ENCODE measurements at regions of chr1 and their contacts with region 1.

Region 1: DNA sequence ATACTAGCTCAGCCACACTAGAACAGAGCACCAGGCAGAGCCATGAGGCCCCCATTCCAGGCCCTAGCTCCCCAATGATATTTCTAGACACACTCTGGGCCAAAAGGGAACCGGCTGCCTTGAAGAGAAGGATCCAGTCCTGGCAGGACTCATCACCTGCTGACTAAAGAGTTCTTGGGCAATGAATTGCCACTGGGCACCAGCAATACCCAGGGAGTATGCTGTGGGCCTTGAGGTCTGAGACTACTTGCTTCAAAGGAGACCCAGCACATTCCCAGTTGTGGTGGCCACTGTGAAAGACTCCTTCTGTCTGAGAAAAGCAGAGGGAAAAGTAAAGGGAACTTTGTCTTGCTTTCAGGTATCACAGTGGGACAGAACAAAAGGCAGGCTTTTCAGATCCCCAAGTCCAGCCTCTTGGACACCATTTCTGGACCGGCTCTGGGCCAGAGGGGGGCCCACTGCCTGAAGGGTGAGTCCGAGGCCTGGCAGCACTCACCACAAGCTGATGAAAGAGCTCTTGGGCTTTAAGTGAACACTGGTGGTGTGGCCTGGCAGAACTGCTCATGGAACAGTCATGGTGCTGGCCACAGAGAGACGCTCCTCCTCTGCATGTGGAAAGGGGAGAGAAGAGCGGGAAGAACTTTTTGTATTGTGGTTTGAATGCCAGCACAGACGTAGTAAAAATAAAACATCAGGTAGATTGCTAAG is 72.5 kb downstream of the CDC42BPA start:
- DNase-seq: peak; percentile 62
- H3K4me3 ChIP-seq: no peak overlapping the region
- H3K27ac ChIP-seq: peak overlapping the region; percentile 75
- H3K4me1 ChIP-seq: peaks cover 55% of the 10 kb centered on the region
- H3K27me3 ChIP-seq: no peaks in the 10 kb centered on the region
- CTCF ChIP-seq: no peak

Region 2: DNA sequence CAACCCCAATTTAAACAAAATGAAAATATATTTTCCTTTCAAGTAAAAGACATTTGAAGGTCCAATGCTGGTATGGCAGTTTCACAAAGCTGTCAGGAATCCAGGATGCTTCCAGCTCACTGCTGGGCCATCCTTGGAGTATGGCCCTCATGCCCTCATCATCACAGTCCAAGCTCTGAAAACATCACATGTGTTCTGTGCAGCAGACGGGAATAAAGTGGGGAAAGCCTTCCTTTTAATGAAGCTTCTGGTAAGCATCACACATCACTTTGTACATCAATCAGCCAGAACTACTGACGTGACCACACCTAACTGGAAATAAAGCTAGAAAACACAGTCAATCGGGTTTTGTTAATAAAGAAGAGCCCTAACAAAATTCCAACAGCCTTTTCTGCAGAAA is 49.8 kb after region 1 on chr1:
- intact Hi-C with region 1: no loop called
- DNase-seq: no peak
- H3K4me3 ChIP-seq: no peak overlapping the region
- H3K27ac ChIP-seq: no peak overlapping the region
- H3K4me1 ChIP-seq: peaks cover 30% of the 10 kb centered on the region
- H3K27me3 ChIP-seq: no peaks in the 10 kb centered on the region
- CTCF ChIP-seq: no peak

Region 3: GRCh38 chr1:227318003-227318852 is 72.5 kb after region 1 on chr1 and contains the start of gene CDC42BPA:
- intact Hi-C with region 1: loop called (anchors 10 kb)
- DNase-seq: peak; percentile 89
- H3K4me3 ChIP-seq: peak within 1 kb of the TSS; percentile 77
- H3K27ac ChIP-seq: peak within 1 kb of the TSS; percentile 98
- H3K4me1 ChIP-seq: peaks cover 32% of the 10 kb centered on the region
- H3K27me3 ChIP-seq: no peaks in the 10 kb centered on the region
- CTCF ChIP-seq: no peak
- total RNA-seq, gene CDC42BPA: 35.1 TPM